Ascending aorta (tissue), 2 donors: ENCODE measurements at regions of chr19 and their contacts with region 1.

Region 1: DNA sequence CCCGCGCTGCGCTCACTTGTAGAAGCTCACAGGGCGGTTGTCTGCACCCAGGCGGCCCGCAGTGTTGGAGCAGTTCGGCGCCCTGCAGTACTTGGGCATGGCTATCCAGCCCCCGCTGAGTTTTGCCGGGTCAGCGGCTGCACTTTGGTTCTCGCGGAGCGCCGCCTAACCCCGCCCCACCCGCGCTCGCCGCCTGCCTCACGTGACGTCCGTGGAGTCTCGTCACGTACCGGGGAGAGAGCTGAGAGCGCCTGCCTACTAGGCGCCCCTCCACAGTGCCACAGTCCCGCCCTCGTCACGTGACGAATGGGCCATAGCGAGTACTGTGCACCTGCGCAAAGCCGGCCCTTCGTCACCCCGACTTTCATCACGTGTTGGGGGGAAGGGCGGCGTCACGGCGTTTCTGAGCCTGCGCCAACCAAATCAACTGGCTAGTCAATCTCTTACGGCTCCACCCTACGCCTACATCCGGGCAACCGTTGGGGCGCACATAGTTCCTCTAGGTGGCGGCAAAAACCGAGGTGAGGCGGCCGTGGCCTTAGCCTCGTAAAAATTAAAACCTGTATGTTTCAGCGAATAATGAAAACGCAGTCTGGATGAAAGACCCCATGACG is at the start of gene THAP8:
- DNase-seq: peak; percentile 100
- H3K4me3 ChIP-seq: peak within 1 kb of the TSS; percentile 71 to 80
- H3K27ac ChIP-seq: peak within 1 kb of the TSS; percentile 91 to 92
- H3K4me1 ChIP-seq: peaks cover 0 to 6% of the 10 kb centered on the region in 2 donors
- H3K27me3 ChIP-seq: no peaks in the 10 kb centered on the region
- CTCF ChIP-seq: peak; percentile 57 to 64 (median 57)
- total RNA-seq, gene THAP8: not detected

Region 2: DNA sequence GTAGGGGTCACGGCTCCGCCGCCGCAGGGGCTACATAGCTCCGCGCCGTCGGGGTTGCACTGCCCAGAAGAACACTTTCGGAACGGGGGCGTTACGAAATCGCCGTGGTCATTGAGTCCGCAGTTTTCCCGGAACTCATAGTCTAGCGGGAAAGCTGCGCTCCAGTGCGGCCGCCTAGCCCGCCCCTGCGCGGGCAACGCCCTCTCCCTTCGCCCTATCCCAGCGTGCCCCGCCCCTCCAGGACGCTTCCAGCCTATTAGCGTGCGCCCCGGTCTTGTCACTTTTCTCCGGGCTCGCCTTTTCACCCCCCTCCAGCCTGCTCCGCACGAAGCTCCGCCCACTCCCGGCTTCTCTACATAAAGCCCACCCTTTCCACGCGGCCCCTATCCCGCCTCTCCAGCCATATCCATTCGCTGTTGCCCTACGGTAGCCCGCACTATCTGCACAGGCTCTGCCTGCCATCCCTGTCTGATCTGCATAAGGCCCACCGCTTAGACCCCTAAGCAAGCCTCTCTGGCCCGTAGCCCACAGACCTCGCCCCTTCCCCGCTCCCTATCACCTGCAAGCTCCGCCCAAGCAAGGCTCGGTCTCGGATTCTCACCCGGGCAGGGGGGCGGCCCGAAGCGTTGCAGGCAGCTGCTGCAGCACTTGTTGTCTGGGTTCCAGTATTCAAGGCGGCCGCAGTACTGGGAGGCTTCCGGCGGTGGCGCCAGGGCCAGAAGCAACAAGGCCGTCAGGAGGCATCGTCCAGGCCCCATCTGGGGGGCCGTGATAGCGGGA is 313.6 kb before region 1 on chr19:
- intact Hi-C with region 1: loop called (anchors 5 kb)
- DNase-seq: peak; percentile 94 to 99
- H3K4me3 ChIP-seq: peak overlapping the region; percentile 56 to 70
- H3K27ac ChIP-seq: peak overlapping the region; percentile 81 to 85
- H3K4me1 ChIP-seq: peaks cover 10 to 18% of the 10 kb centered on the region in 2 donors
- H3K27me3 ChIP-seq: no peaks in the 10 kb centered on the region
- CTCF ChIP-seq: peak; percentile 12 to 22 (median 18)

Region 3: DNA sequence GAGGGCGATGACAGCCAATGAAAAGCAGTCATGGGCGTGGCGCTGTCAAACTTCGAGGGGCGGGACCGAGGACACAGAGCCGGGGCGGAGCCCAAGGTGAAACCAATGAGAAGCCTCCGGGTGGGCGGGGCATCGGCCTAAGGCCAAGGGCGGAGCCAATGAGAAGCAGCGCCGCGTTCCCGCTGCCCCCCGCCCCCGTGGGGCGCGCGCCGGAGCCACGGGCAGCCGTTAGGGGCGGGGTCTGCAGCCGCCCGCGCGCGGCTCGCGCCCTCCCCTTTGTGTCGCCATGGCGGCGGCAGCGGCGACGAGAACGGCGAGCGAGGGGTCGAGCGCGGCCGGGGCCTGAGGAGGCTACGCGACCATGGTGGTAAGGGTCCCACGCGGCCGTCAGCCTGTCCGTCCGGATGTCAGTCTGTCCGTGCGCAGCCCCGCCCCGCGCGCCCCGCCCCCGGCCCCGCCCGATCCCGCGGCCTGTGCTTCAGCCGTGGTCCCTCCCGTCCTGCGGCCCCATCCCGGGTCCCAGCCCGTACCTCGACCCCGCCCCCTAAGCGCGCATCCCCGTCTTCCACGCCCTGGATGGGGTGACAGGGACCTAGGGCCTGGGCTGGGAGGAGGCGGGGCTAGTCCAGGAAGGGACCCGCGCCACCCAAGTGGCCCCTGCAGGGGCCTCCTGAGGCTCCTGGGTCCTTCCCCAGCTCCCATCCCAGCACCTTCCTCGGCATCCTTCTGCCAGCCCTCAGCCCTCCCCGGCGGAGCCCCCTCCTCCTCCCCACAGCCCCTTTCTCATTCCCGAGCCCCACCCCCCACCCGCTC is 278.7 kb before region 1 on chr19 and contains the start of gene ARHGAP33:
- intact Hi-C with region 1: loop called (anchors 1 kb)
- DNase-seq: peak; percentile 96 to 99
- H3K4me3 ChIP-seq: peak within 1 kb of the TSS; percentile 84 to 88
- H3K27ac ChIP-seq: peak within 1 kb of the TSS; percentile 59 to 61
- H3K4me1 ChIP-seq: peaks cover 5 to 14% of the 10 kb centered on the region in 2 donors
- H3K27me3 ChIP-seq: no peaks in the 10 kb centered on the region
- CTCF ChIP-seq: no peak
- total RNA-seq, gene ARHGAP33: 8.7 TPM

Region 4: GRCh38 chr19:35995048-35995993 is 58.9 kb before region 1 on chr19 and contains the start of gene SDHAF1:
- intact Hi-C with region 1: loop called (anchors 5 kb)
- DNase-seq: peak; percentile 85 to 98
- H3K4me3 ChIP-seq: peak within 1 kb of the TSS; percentile 82 to 87
- H3K27ac ChIP-seq: peak within 1 kb of the TSS; percentile 73 to 74
- H3K4me1 ChIP-seq: peaks cover 3 to 14% of the 10 kb centered on the region in 2 donors
- H3K27me3 ChIP-seq: no peaks in the 10 kb centered on the region
- CTCF ChIP-seq: no peak
- total RNA-seq, gene SDHAF1: 107 TPM

Region 5: GRCh38 chr19:36032251-36033104 is 21.7 kb before region 1 on chr19 and contains the start of gene CLIP3:
- intact Hi-C with region 1: loop called (anchors 1 kb)
- DNase-seq: peak; percentile 12 to 81
- H3K4me3 ChIP-seq: peak within 1 kb of the TSS; percentile 67 to 95
- H3K27ac ChIP-seq: peak within 1 kb of the TSS; percentile 75 to 85
- H3K4me1 ChIP-seq: peaks cover 0 to 4% of the 10 kb centered on the region in 2 donors
- H3K27me3 ChIP-seq: no peaks in the 10 kb centered on the region
- CTCF ChIP-seq: no peak
- total RNA-seq, gene CLIP3: 43.2 TPM

Region 6: GRCh38 chr19:36108684-36109083 is 54.5 kb after region 1 on chr19:
- intact Hi-C with region 1: no loop called
- DNase-seq: no peak
- H3K4me3 ChIP-seq: no peak overlapping the region
- H3K27ac ChIP-seq: no peak overlapping the region
- H3K4me1 ChIP-seq: peaks cover 0 to 5% of the 10 kb centered on the region in 2 donors
- H3K27me3 ChIP-seq: no peaks in the 10 kb centered on the region
- CTCF ChIP-seq: no peak

Region 7: DNA sequence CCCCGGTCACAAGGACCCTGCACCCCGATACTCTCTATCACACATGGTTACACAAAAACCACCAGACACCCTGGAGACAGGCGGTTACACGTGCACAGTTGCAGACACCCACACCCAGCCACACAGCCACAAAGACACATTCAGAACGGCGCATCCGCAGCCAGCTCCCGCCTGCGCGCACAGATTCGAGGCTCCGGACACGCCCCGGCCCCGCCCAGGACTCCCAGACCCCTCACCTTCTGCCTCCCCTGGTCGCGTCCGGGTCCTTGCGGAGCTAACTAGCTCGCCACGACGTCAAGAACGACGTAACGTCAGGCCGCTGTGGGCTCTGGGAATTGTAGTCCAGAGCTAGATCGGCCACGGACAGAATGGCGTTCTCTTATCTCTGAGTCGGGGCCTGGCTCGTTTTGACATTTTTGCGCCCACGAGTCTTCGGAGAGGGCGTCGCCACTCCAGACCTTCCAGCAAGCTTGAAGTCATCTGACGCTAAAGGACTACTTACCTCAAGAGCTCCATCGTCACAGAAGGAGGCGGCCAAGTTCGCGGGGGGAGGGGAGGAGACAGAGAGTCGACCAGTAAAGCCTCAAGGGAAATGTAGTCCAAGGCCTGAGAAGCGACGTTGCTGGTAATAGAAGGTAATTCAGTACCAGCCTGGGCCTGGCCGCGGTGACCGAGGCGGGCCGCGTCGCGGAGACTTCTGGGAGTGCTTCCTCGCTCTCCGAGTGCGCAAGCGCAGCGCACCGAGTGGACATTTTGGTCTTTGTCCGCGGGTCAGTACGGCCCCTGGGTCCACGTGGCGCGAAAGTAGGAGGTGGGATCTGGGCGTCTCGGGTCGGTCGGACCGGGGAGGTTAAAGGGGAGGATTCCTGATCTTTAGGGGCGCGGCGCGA is 160.4 kb after region 1 on chr19 and contains the starts of genes ZNF146 and ZNF565:
- intact Hi-C with region 1: loop called (anchors 10 kb)
- DNase-seq: peak; percentile 96 to 99
- H3K4me3 ChIP-seq: peak within 1 kb of the TSS; percentile 81
- H3K27ac ChIP-seq: peak within 1 kb of the TSS; percentile 92 to 96
- H3K4me1 ChIP-seq: peaks cover 0 to 12% of the 10 kb centered on the region in 2 donors
- H3K27me3 ChIP-seq: no peaks in the 10 kb centered on the region
- CTCF ChIP-seq: no peak
- total RNA-seq, gene ZNF146: 21.2 TPM
- total RNA-seq, gene ZNF565: 1.9 TPM